T-cell (primary cell): ENCODE measurements at regions of chr5 and their contacts with region 1.

Region 1: DNA sequence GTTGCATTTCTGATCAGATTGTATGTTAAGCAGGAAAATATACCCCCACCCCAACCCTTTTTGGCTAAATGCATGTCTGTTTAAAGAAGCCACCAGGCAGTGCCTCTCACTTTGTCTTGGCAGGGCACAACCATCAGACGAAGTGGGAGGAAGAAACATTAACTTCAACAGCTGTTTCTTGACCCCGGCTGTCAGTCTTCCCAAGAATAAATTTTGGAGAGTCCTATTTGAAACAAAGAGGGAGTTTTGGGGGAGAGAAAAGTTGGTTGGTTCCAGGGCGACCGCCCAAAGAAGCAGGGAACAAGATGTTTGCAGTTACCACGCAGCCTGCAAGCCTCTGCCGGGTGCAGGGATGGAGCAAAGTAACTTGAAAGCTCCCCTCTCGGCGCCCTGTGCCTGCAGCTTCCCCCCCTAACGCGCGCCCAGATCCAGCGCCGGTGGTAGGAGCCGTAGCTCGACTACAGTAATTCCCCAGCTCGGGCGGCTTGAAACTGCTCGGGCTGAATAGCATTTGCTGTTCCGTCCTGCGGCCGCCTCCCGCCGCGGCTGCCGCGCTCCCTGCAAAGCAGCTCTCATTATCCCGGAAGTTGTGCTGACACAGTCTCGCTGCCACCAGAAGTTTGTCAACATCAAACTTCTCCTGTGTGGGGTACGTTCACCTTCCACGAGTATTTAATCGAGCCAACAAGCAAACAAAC is 100.7 kb upstream of the SSBP2 start:
- DNase-seq: peak; percentile 78 to 94 (median 87)
- ATAC-seq: peak; percentile 89 to 93 (median 90)
- H3K4me3 ChIP-seq: peak overlapping the region; percentile 58 to 84
- H3K4me3 Mint-ChIP-seq: peak overlapping the region; percentile 84 to 92 (median 91)
- H3K27ac ChIP-seq: peak overlapping the region; percentile 65
- H3K27ac Mint-ChIP-seq: peak overlapping the region; percentile 98 to 99
- H3K4me1 ChIP-seq: peaks cover 20 to 31% of the 10 kb centered on the region in 2 experiments
- H3K4me1 Mint-ChIP-seq: peaks cover 40 to 49% (median 48%) of the 10 kb centered on the region in 3 donors
- H3K27me3 ChIP-seq: no peaks in the 10 kb centered on the region
- H3K27me3 Mint-ChIP-seq: no peaks in the 10 kb centered on the region

Region 2: DNA sequence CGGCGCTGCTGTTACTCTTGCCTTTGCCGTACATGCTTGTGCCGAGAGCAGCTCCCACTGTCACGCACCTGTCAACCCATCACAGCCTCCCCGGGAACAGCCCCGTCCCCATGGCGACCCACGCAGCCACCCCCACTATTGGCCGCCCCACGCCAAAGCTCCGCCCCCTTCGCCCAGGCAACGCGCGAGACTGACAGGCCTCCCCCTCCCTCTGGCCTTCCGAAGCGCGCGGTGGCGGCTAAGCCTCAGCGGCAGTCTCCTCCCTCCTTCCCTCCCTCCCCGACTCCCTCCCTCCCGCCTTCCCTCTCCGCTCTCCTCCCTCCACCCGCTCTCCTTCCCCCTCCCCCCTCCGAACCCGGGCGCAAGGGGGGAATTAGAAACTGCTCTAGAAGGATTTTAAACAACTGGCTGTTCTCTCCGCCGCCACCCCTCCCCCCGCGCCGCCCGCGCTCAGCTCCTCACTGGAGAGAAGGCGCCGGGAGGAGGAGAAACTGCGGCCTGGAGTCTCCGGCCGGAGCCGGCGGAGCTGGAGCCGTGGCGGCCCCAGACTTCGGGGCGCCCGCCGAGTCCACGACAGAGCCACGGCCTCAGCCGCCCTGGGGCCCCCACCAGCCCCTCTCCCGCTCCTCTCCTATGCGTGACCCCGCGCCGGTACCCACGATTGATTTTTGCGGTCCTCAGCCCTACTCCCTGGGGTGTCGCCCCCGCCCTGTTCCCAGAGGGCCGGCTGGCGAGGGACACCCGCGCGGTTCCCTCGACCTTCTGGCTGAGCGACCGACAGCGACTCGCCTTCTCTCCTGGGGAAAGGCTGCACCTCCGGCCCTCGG is 100.4 kb before region 1 on chr5 and contains the start of gene SSBP2:
- CTCF ChIA-PET with region 1: interaction called in 1 of 2 experiments, 24 read pairs
- POLR2A ChIA-PET with region 1: interaction called, 3 to 38 read pairs
- DNase-seq: peak; percentile 97 to 100 (median 99)
- ATAC-seq: peak; percentile 86 to 91 (median 88)
- H3K4me3 ChIP-seq: peak within 1 kb of the TSS; percentile 61 to 77
- H3K4me3 Mint-ChIP-seq: peak within 1 kb of the TSS; percentile 94 to 96 (median 95)
- H3K27ac ChIP-seq: peak within 1 kb of the TSS; percentile 69
- H3K27ac Mint-ChIP-seq: peak within 1 kb of the TSS; percentile 88
- H3K4me1 ChIP-seq: peaks cover 12 to 23% of the 10 kb centered on the region in 2 experiments
- H3K4me1 Mint-ChIP-seq: peaks cover 31 to 41% (median 36%) of the 10 kb centered on the region in 3 donors
- H3K27me3 ChIP-seq: no peaks in the 10 kb centered on the region
- H3K27me3 Mint-ChIP-seq: no peaks in the 10 kb centered on the region
- total RNA-seq, gene SSBP2: 31.1 to 44.9 (median 35.8) TPM